Activated naive CD4-positive, alpha-beta T cell treated with anti-CD3 and anti-CD28 coated beads for 36 hours (primary cell): ENCODE measurements at regions of chr19 and their contacts with region 1.

Region 1: DNA sequence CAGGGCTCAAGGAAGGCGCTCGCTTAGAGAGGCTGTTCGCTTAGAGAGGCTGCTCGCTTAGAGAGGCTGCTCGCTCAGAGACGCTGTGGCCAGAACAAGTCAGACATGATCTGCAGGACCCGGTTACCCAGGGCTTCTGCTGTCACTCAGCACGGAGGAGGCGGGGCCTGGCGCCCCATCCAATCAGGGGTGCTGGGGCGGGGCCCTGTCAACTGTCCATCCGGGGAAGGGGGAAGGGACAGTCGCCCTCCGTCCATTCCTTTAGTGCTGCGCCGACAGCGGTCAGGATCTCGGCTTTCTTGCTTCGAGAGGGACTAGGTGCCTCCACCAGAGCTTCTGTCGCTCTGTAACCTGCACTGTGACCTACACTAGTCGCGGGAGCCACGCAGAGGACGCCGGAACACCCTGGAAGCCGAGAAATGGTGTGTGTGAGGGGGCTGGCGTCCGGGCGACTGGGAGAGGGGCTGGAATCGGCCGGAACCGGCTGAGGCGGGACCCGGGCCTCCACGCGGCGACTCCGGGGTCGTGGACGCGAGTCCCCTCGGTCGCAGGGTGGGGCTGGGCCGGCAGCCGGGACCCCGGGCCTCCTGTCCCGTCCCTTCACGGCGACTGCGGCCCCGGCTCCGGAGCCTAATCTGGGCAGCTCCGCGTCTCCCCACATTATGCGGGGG is at the start of gene ZNF440:
- DNase-seq: peak; percentile 93
- H3K4me3 Mint-ChIP-seq: peak within 1 kb of the TSS; percentile 88
- H3K27ac Mint-ChIP-seq: peak within 1 kb of the TSS; percentile 66
- H3K4me1 Mint-ChIP-seq: peaks cover 21% of the 10 kb centered on the region
- H3K27me3 Mint-ChIP-seq: no peaks in the 10 kb centered on the region
- total RNA-seq, gene ZNF440: 3.6 to 4.8 TPM

Region 2: GRCh38 chr19:11738746-11739620 is 75.2 kb before region 1 on chr19 and contains the start of gene ZNF823:
- CTCF ChIA-PET with region 1: no interaction called
- intact Hi-C with region 1: loop called (anchors 1 kb)
- DNase-seq: peak; percentile 100
- H3K4me3 Mint-ChIP-seq: peak within 1 kb of the TSS; percentile 99
- H3K27ac Mint-ChIP-seq: peak within 1 kb of the TSS; percentile 82
- H3K4me1 Mint-ChIP-seq: peaks cover 18% of the 10 kb centered on the region
- H3K27me3 Mint-ChIP-seq: no peaks in the 10 kb centered on the region
- total RNA-seq, gene ZNF823: 4.1 to 4.2 TPM

Region 3: GRCh38 chr19:11766597-11767591 is 47.3 kb before region 1 on chr19 and contains the start of gene ZNF441:
- CTCF ChIA-PET with region 1: no interaction called
- intact Hi-C with region 1: loop called (anchors 5 kb)
- DNase-seq: peak; percentile 98
- H3K4me3 Mint-ChIP-seq: peak within 1 kb of the TSS; percentile 96
- H3K27ac Mint-ChIP-seq: peak within 1 kb of the TSS; percentile 93
- H3K4me1 Mint-ChIP-seq: peaks cover 16% of the 10 kb centered on the region
- H3K27me3 Mint-ChIP-seq: peaks cover 2% of the 10 kb centered on the region
- total RNA-seq, gene ZNF441: 4.0 TPM

Region 4: GRCh38 chr19:11848594-11849469 is 34.7 kb after region 1 on chr19 and contains the start of gene ZNF439:
- CTCF ChIA-PET with region 1: interaction called, 3 read pairs
- intact Hi-C with region 1: loop called (anchors 1 kb)
- DNase-seq: peak; percentile 97
- H3K4me3 Mint-ChIP-seq: peak within 1 kb of the TSS; percentile 83
- H3K27ac Mint-ChIP-seq: peak within 1 kb of the TSS; percentile 76
- H3K4me1 Mint-ChIP-seq: peaks cover 15% of the 10 kb centered on the region
- H3K27me3 Mint-ChIP-seq: no peaks in the 10 kb centered on the region
- total RNA-seq, gene ZNF439: 3.6 to 4.4 TPM